GM13976 (cell line): ENCODE measurements at regions of chr20 and their contacts with region 1.

Region 1: DNA sequence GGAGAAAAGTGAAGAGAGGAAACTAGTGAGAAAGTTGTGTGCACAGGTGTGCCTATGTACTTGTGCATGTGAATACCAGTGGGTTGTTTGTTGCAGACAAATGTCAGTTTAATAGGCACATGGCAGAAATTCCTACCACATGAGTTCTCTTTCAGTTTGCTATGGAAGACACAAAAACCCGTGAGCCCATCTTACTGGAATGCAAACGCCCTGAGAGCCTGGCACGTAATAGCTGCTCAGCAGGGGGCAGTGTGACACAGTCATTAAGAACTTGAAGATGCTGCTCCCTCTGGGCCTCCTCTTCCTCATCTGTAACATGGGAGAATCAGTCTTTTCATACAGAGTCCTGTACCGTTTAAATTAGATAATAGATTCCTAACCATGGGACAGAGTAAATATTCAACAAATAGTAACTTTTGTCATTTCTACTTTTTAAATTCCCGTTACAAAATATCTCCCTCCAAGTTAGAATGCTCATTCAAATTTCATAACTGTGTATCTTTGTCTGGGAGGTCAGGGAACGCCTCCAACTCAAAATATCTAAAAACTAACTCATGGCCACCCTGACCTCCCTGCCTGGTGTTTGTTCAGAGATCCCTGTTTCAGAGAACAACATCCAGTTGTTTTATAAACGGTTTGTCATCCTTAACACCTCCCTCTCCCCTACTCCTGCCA is 802.9 kb downstream of the MAFB start:
- DNase-seq: peak; percentile 15
- CTCF ChIP-seq: peak; percentile 64

Region 2: GRCh38 chr20:40265825-40266533 is 379.9 kb after region 1 on chr20:
- in situ Hi-C with region 1: loop called (anchors 25 kb)
- DNase-seq: no peak
- CTCF ChIP-seq: no peak